ENCODE measurements at regions of chr5 and their contacts with region 1.

Region 1: GRCh38 chr5:139633295-139634027 is 14.7 kb upstream of the CXXC5 start:
- DNase-seq: no peak
- ATAC-seq: peak; percentile 44
- H3K4me3 ChIP-seq: no peak overlapping the region
- H3K27ac ChIP-seq: no peak overlapping the region
- H3K4me1 ChIP-seq: peaks cover 55% of the 10 kb centered on the region
- H3K27me3 ChIP-seq: no peaks in the 10 kb centered on the region
- CTCF ChIP-seq: peak; percentile 99; a peak in 5 of 6 replicates
- EP300 ChIP-seq: no peak
- POLR2A ChIP-seq: peak; percentile 72
- RAD21 ChIP-seq: peak; percentile 91

Region 2: DNA sequence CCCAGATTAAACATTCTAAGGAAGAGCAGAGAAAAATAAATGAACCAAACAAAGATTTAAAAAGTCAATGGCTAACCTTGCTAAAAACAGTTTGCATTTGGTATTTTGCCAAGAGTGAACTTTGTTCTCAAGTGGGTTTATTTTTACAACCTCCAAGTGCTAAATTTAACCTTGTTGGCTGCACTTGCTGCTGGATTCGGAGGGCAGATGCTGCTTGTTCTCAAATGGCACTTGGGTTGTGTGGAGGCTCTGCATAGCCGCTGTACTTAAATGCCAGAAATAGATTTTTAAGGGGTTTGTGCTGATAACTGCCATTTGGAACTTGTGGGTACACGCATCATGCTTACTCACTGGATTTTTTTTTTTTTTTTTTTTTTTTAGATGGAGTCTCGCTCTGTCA is 216.2 kb before region 1 on chr5:
- CTCF ChIA-PET with region 1: interaction called, 11 read pairs
- POLR2A ChIA-PET with region 1: no interaction called
- RAD21 ChIA-PET with region 1: interaction called, 6 read pairs
- SMC1A ChIA-PET with region 1: interaction called, 30 read pairs
- in situ Hi-C with region 1: no loop called
- intact Hi-C with region 1: loop called (anchors 5 kb)
- DNase-seq: no peak
- ATAC-seq: no peak
- H3K4me3 ChIP-seq: no peak overlapping the region
- H3K27ac ChIP-seq: no peak overlapping the region
- H3K4me1 ChIP-seq: peaks cover 21% of the 10 kb centered on the region
- H3K27me3 ChIP-seq: no peaks in the 10 kb centered on the region
- CTCF ChIP-seq: no peak
- EP300 ChIP-seq: no peak
- POLR2A ChIP-seq: no peak
- RAD21 ChIP-seq: no peak

Region 3: GRCh38 chr5:139560752-139561654 is 72.5 kb before region 1 on chr5 and contains the start of gene UBE2D2:
- CTCF ChIA-PET with region 1: interaction called, 5 read pairs
- POLR2A ChIA-PET with region 1: interaction called, 7 read pairs
- RAD21 ChIA-PET with region 1: interaction called, 25 read pairs
- SMC1A ChIA-PET with region 1: interaction called, 10 read pairs
- in situ Hi-C with region 1: no loop called
- intact Hi-C with region 1: no loop called
- DNase-seq: peak; percentile 92
- ATAC-seq: peak; percentile 87
- H3K4me3 ChIP-seq: peak within 1 kb of the TSS; percentile 75
- H3K27ac ChIP-seq: peak within 1 kb of the TSS; percentile 69
- H3K4me1 ChIP-seq: peaks cover 20% of the 10 kb centered on the region
- H3K27me3 ChIP-seq: no peaks in the 10 kb centered on the region
- CTCF ChIP-seq: no peak
- EP300 ChIP-seq: no peak
- POLR2A ChIP-seq: peak; percentile 87
- RAD21 ChIP-seq: no peak
- polyA plus RNA-seq, gene UBE2D2: 58.6 to 120 TPM

Region 4: DNA sequence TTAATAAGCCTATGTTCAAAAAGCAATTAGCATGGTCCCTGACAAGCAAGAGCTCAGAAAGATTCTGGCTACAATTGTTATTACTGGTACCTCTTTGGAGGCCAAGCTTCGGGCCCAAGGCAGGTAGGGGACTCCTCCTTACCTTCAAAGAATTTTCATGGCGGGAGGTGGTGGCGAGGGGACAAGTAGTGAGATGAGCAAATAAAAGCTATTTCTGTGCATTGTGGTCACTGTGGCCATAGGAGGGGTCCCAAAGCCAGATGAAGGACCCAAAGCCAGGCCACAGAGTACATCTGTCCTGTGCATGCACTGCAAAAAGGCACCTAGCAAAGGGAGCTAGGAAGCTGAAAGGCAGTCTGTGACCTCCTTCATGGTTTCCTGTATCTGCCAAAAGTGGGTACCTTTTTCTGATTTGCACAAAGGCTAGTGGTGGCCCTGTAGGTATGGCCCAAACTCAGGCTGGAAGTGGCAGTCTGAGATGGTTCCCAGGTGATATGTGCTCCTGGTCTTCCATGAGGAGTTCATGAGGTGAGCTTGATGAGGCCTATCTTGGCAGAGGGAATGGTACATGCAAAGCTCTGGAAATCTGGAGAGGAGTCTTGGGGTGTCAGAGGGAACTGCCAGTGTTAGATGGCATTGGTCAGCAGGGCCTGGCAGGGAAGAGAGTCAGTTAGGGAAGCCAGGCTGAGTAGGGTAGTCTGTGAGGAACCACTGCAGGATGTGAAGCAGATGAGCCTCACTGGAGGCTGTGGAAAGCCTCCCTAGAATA is 11.4 kb after region 1 on chr5:
- CTCF ChIA-PET with region 1: interaction called, 201 read pairs
- POLR2A ChIA-PET with region 1: interaction called, 127 read pairs
- RAD21 ChIA-PET with region 1: interaction called, 265 read pairs
- SMC1A ChIA-PET with region 1: interaction called, 175 read pairs
- in situ Hi-C with region 1: no loop called
- intact Hi-C with region 1: loop called (anchors 1 kb)
- DNase-seq: no peak
- ATAC-seq: no peak
- H3K4me3 ChIP-seq: no peak overlapping the region
- H3K27ac ChIP-seq: no peak overlapping the region
- H3K4me1 ChIP-seq: peaks cover 18% of the 10 kb centered on the region
- H3K27me3 ChIP-seq: no peaks in the 10 kb centered on the region
- CTCF ChIP-seq: no peak
- EP300 ChIP-seq: no peak
- POLR2A ChIP-seq: no peak
- RAD21 ChIP-seq: no peak

Region 5: DNA sequence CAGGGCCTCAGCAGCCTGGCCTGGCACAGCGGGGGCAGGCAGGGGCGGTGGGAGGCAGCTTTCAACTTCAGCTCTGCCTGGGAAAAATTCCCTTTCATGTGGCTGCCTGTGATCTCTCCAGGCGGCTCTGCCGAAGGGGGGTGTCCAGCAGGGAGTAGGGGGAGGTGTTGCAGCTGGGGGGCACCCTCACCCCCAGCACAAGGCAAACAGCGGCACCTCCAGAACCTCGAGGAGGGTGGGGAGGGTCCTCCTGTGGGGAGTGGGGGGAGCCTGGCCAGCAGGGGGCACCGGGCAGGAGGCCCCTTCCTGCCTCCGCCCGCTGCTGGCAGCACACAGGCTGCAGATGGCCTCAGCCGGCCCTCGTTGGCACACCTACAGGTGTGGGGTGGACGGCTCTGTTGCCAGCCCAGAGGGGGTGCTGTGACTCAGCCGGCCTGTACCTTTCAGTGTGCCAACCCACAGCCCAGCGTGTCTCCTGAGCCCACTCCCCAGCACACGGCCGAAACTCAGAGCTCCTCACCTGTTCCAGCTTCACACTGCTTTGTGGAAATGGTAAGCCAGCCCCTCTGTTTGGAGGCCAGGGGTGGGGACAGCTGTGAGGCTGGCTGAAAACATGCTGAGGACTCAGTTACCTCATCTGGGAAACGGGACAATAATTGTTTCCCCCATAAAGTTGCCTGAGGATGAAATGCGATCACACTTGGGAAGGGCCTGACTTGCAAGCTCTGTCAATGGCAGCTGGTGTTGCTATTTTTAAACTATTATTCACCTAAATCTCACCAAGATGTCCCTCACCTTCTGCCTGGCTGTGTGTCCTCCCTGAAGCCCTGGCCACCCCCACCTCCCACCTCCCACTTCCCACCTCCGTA is 51.7 kb after region 1 on chr5:
- CTCF ChIA-PET with region 1: interaction called, 335 read pairs
- POLR2A ChIA-PET with region 1: interaction called, 44 read pairs
- RAD21 ChIA-PET with region 1: interaction called, 241 read pairs
- SMC1A ChIA-PET with region 1: interaction called, 212 read pairs
- in situ Hi-C with region 1: loop called (anchors 5 kb)
- intact Hi-C with region 1: loop called (anchors 1 kb)
- DNase-seq: no peak
- ATAC-seq: no peak
- H3K4me3 ChIP-seq: no peak overlapping the region
- H3K27ac ChIP-seq: no peak overlapping the region
- H3K4me1 ChIP-seq: peaks cover 12% of the 10 kb centered on the region
- H3K27me3 ChIP-seq: no peaks in the 10 kb centered on the region
- CTCF ChIP-seq: 0 out of 6 replicates have a peak, but pooled peaks of 1 of the 3 experiments have one; percentile 21
- EP300 ChIP-seq: no peak
- POLR2A ChIP-seq: peak; percentile 55; the same call in 1 of the 2 replicates
- RAD21 ChIP-seq: no peak

Region 6: DNA sequence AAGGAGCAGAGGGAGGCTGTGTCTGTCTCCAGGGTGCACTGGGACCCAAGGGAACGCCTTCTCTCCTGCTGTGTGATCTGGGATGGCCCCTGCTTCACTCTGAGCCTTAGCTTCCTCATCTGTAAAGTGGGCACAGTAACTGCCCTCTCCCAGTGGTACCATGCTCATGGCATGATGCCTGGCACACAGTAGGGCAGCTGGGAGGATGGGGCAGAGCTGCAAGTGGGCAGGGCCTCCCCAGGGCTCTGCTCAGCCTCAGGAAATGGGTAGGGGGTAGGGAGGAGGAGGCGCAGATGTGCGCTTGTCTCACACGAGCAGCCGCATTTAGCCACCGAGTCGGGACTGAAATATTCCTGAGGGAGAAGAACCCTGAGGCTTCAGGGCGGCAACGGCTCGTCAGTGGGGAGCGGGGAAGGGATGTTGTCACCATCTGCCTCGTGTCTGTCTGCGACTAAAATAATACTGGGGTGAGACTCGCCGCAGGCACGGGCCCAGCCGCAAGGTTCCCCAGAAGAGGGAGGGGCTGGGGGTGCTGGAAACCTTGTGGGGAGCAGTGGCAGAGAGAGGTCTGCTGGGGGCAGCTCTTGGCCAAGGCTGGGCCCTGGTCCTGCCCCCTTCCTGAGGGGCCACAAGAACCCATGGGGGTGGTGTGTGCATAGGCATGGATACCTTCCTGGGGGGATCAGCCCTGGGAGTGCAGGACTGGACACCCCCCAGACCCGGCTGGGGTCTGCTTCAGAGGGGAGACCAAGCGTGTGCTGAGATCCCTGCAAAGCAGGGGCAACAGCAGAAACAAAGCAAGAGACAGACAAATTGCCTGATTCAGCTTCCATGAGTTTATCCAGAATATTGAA is 106.9 kb after region 1 on chr5:
- CTCF ChIA-PET with region 1: interaction called, 20 read pairs
- POLR2A ChIA-PET with region 1: interaction called, 31 read pairs
- RAD21 ChIA-PET with region 1: interaction called, 60 read pairs
- SMC1A ChIA-PET with region 1: interaction called, 50 read pairs
- in situ Hi-C with region 1: no loop called
- intact Hi-C with region 1: loop called (anchors 5 kb)
- DNase-seq: no peak
- ATAC-seq: peak; percentile 40
- H3K4me3 ChIP-seq: no peak overlapping the region
- H3K27ac ChIP-seq: no peak overlapping the region
- H3K4me1 ChIP-seq: peaks cover 25% of the 10 kb centered on the region
- H3K27me3 ChIP-seq: no peaks in the 10 kb centered on the region
- CTCF ChIP-seq: no peak
- EP300 ChIP-seq: no peak
- POLR2A ChIP-seq: no peak
- RAD21 ChIP-seq: no peak

Region 7: GRCh38 chr5:139774980-139775661 is 141.7 kb after region 1 on chr5:
- CTCF ChIA-PET with region 1: interaction called, 291 read pairs
- POLR2A ChIA-PET with region 1: no interaction called
- RAD21 ChIA-PET with region 1: interaction called, 22 read pairs
- SMC1A ChIA-PET with region 1: interaction called, 8 read pairs
- in situ Hi-C with region 1: no loop called
- intact Hi-C with region 1: no loop called
- DNase-seq: no peak
- ATAC-seq: peak; percentile 98
- H3K4me3 ChIP-seq: no peak overlapping the region
- H3K27ac ChIP-seq: no peak overlapping the region
- H3K4me1 ChIP-seq: peaks cover 7% of the 10 kb centered on the region; the same call in 1 of the 2 replicates
- H3K27me3 ChIP-seq: peaks cover 0 to 3% of the 10 kb centered on the region in 2 experiments; a peak in 1 of 4 replicates
- CTCF ChIP-seq: peak; percentile 78 to 98 (median 90)
- EP300 ChIP-seq: no peak
- POLR2A ChIP-seq: no peak
- RAD21 ChIP-seq: peak; percentile 47